ENCODE measurements at regions of chr5 and their contacts with region 1.

Region 1: DNA sequence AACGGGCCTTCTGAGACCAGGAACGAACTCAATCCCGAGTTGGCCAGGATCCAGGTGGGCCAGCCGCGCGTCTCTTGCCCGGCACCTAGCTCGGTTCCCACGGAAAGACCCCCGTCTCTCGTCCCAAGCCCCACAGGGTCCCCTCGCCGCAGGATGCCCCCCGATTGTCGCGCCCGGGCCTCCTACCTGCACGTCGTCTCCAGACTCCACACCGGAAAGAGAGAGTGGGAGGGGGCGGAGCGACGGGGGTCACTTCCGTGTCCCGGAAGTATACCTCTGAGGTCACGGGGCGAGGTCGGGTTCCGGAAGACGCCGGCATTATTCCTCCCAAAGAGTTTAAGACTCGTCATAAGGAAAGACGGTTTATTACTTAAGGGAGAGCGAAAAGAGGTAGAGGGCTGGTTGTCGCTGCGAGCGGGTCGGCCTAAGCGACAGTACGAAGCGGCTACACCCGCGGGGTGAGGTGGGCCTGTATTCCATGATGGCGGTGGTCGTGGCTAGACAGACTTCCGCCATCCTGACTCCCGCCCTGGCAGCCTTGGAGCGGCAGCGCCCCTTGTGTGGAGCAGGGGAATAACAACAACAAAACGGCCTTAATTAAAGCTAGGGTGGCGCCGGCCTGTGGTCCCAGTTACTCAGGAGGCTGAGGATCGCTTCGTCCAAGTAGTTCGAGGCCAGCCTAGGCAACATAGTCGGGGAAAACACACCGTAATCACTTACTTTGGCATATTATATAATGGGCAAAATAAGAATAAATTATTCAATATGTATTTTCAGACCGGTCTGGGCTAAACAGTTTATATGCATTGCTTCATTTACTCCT is at the start of gene RPS14:
- DNase-seq: peak; percentile 89 to 97 (median 94)
- ATAC-seq: peak; percentile 88
- H3K4me3 ChIP-seq: peak within 1 kb of the TSS; percentile 86
- H3K4me3 Mint-ChIP-seq: peak within 1 kb of the TSS; percentile 96
- H3K27ac ChIP-seq: peak within 1 kb of the TSS; percentile 94 to 98
- H3K27ac Mint-ChIP-seq: peak within 1 kb of the TSS; percentile 98
- H3K4me1 ChIP-seq: peaks cover 36% of the 10 kb centered on the region
- H3K4me1 Mint-ChIP-seq: peaks cover 39% of the 10 kb centered on the region
- H3K27me3 ChIP-seq: no peaks in the 10 kb centered on the region
- H3K27me3 Mint-ChIP-seq: no peaks in the 10 kb centered on the region
- CTCF ChIP-seq: peak; percentile 94
- total RNA-seq, gene RPS14: 5,224 to 5,317 TPM

Region 2: DNA sequence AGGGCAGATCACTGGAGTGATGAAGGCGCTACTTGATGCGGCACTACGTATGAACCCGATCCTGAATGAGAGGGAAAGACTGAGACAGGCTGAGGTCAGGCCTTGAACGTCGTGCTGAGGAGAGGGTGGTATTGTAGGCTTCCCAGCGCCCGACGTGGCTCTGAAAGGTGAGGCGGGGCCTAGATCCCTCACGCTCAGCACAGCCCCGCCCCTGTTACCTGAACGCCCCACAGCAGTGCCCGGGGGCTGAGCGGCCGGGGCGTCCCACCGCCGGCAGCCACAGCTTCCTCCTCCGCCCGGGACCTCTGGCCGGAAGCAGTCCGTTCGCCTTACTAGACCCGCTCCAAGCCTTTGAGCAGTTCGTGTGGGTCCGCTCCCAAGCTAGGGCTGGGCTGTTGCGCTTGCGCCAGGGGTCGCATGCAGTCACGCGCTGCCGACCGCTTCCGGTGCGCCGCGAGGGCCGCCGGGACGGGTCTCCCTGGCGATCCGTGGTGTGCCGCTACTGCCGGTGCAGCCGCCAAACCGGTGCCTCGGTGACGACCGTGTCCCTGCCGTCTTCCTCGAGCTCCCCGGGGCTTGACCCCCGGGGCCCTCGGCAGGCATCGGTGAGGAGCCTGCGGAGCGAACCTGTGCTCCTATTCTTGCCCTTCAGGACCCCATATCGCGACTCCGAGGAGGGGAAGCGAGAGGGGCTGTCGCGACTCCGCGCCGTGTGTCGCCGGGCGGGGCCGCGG is 449.3 kb before region 1 on chr5 and contains the starts of genes HMGXB3 and TIGD6:
- CTCF ChIA-PET with region 1: no interaction called
- POLR2A ChIA-PET with region 1: no interaction called
- intact Hi-C with region 1: loop called in 1 of 2 experiments (anchors 5 kb)
- DNase-seq: peak; percentile 65 to 94 (median 76)
- ATAC-seq: peak; percentile 82
- H3K4me3 ChIP-seq: peak within 1 kb of the TSS; percentile 70
- H3K4me3 Mint-ChIP-seq: peak within 1 kb of the TSS; percentile 96
- H3K27ac ChIP-seq: peak within 1 kb of the TSS; percentile 72 to 79
- H3K27ac Mint-ChIP-seq: peak within 1 kb of the TSS; percentile 95
- H3K4me1 ChIP-seq: peaks cover 34% of the 10 kb centered on the region
- H3K4me1 Mint-ChIP-seq: peaks cover 38% of the 10 kb centered on the region
- H3K27me3 ChIP-seq: no peaks in the 10 kb centered on the region
- H3K27me3 Mint-ChIP-seq: no peaks in the 10 kb centered on the region
- CTCF ChIP-seq: no peak
- total RNA-seq, gene HMGXB3: 27.4 to 29.3 TPM
- total RNA-seq, gene TIGD6: 1.0 to 1.4 TPM

Region 3: DNA sequence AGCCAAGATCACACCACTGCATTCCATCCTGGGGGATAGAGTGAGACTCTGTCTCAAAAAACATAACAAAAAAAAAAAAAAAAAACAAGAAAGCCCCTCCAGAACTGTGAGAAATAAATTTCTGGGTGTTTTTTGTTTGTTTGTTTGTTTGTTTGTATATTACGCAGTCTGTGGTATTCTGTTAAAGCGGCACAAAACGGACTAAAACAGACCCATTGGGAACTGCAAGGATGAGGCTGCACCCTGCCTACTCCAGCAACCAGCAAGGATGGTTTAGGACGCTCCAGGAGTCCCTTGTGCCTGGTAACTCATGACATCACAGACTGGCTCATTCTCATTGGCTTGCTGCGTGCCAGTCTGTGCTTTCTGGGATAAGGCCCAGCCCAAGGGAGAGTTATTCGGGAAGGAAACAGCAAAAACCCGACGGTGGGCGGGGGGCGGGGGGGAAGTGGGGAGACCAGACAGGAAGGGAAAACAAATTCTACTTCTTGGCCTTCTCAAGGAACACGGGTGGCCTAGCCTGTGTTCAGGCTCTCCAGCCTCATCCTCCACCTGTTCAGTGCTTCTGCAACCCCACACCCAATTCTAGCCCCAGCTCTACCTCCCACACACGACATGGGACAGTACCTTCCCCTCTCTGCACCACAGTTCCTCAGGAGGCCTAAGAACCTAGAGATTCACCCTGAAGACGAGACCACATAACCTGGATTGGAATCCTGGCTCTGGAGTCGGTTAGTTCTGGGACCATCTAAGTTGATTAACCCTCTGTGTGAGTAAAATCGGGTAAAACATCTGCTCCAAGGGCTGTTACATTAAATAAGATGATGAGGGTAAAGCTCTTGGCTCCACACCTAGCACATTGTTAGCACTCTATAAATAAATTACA is 39.8 kb before region 1 on chr5:
- CTCF ChIA-PET with region 1: interaction called, 9 read pairs
- POLR2A ChIA-PET with region 1: interaction called, 72 read pairs
- intact Hi-C with region 1: loop called (anchors 1 kb)
- DNase-seq: peak in 10 of 14 experiments; percentile 16 to 77 (median 38)
- ATAC-seq: no peak
- H3K4me3 ChIP-seq: peak overlapping the region; percentile 97
- H3K4me3 Mint-ChIP-seq: peak overlapping the region; percentile 99
- H3K27ac ChIP-seq: peak overlapping the region; percentile 94 to 98
- H3K27ac Mint-ChIP-seq: peak overlapping the region; percentile 98
- H3K4me1 ChIP-seq: peaks cover 65% of the 10 kb centered on the region
- H3K4me1 Mint-ChIP-seq: peaks cover 40% of the 10 kb centered on the region
- H3K27me3 ChIP-seq: no peaks in the 10 kb centered on the region
- H3K27me3 Mint-ChIP-seq: no peaks in the 10 kb centered on the region
- CTCF ChIP-seq: no peak

Region 4: GRCh38 chr5:150758531-150759333 is 309.0 kb after region 1 on chr5 and contains the start of gene DCTN4:
- CTCF ChIA-PET with region 1: no interaction called
- POLR2A ChIA-PET with region 1: interaction called, 10 read pairs
- intact Hi-C with region 1: loop called in 1 of 2 experiments (anchors 5 kb)
- DNase-seq: peak; percentile 82 to 99 (median 90)
- ATAC-seq: peak; percentile 92
- H3K4me3 ChIP-seq: peak within 1 kb of the TSS; percentile 69
- H3K4me3 Mint-ChIP-seq: no peak within 1 kb of the TSS
- H3K27ac ChIP-seq: peak within 1 kb of the TSS; percentile 96
- H3K27ac Mint-ChIP-seq: no peak within 1 kb of the TSS
- H3K4me1 ChIP-seq: peaks cover 24% of the 10 kb centered on the region
- H3K4me1 Mint-ChIP-seq: peaks cover 33% of the 10 kb centered on the region
- H3K27me3 ChIP-seq: no peaks in the 10 kb centered on the region
- H3K27me3 Mint-ChIP-seq: no peaks in the 10 kb centered on the region
- CTCF ChIP-seq: no peak
- total RNA-seq, gene DCTN4: 81.2 to 84.4 TPM

Region 5: GRCh38 chr5:150797384-150797783 is 347.7 kb after region 1 on chr5:
- CTCF ChIA-PET with region 1: no interaction called
- POLR2A ChIA-PET with region 1: no interaction called
- intact Hi-C with region 1: no loop called
- DNase-seq: no peak
- ATAC-seq: no peak
- H3K4me3 ChIP-seq: no peak overlapping the region
- H3K4me3 Mint-ChIP-seq: no peak overlapping the region
- H3K27ac ChIP-seq: no peak overlapping the region
- H3K27ac Mint-ChIP-seq: no peak overlapping the region
- H3K4me1 ChIP-seq: peaks cover 7% of the 10 kb centered on the region
- H3K4me1 Mint-ChIP-seq: peaks cover 5% of the 10 kb centered on the region
- H3K27me3 ChIP-seq: no peaks in the 10 kb centered on the region
- H3K27me3 Mint-ChIP-seq: no peaks in the 10 kb centered on the region
- CTCF ChIP-seq: no peak

Region 6: DNA sequence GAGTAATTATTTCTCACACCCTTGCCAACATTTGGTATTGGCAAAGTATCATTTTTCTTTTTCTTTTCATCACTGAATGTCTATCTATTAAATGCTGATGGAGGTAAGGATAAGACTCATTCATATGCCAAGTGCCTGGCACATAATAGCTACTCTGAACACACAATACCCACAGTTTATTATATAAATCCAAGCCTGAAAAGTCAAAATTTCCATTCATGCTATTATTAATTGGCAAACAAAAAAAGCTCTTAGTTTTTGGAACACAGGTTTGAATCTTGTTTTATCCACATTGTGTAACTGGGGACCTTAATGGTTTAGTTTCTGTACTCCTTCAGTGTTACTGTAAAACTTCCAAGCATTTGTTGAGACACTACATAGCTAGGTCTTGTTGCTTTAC is 1315.1 kb after region 1 on chr5:
- CTCF ChIA-PET with region 1: no interaction called
- POLR2A ChIA-PET with region 1: no interaction called
- intact Hi-C with region 1: loop called in 1 of 2 experiments (anchors 10 kb)
- DNase-seq: no peak
- ATAC-seq: no peak
- H3K4me3 ChIP-seq: no peak overlapping the region
- H3K4me3 Mint-ChIP-seq: no peak overlapping the region
- H3K27ac ChIP-seq: no peak overlapping the region
- H3K27ac Mint-ChIP-seq: no peak overlapping the region
- H3K4me1 ChIP-seq: peaks cover 7% of the 10 kb centered on the region
- H3K4me1 Mint-ChIP-seq: peaks cover 6% of the 10 kb centered on the region
- H3K27me3 ChIP-seq: no peaks in the 10 kb centered on the region
- H3K27me3 Mint-ChIP-seq: no peaks in the 10 kb centered on the region
- CTCF ChIP-seq: no peak

Measured in CD4-positive, alpha-beta T cell (primary cell).